ENCODE measurements at regions of chr2 and their contacts with region 1.

Region 1: DNA sequence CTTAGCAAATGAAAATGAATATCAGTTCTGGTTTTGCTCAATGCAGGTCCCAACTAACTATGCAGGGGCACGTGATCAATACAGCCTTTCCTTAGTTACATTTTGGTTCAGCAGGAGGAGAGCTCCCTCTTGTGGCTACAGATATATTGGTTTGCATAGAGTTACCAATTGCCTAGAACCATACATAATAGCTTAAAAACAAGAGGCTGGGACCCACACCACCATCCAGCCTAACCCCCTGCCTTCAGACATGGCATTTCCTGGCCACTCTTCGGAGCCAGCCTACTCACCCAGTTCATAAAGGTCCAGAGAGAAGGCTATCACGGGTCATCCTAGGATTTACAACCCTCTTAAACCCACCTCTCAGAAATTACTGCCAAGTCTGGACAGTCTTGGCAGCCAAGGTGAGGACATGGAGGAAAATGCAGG is 10.5 kb downstream of the CCDC93 start:
- DNase-seq: peak in 4 of 10 donors; percentile 27 to 80 (median 40)

Region 2: DNA sequence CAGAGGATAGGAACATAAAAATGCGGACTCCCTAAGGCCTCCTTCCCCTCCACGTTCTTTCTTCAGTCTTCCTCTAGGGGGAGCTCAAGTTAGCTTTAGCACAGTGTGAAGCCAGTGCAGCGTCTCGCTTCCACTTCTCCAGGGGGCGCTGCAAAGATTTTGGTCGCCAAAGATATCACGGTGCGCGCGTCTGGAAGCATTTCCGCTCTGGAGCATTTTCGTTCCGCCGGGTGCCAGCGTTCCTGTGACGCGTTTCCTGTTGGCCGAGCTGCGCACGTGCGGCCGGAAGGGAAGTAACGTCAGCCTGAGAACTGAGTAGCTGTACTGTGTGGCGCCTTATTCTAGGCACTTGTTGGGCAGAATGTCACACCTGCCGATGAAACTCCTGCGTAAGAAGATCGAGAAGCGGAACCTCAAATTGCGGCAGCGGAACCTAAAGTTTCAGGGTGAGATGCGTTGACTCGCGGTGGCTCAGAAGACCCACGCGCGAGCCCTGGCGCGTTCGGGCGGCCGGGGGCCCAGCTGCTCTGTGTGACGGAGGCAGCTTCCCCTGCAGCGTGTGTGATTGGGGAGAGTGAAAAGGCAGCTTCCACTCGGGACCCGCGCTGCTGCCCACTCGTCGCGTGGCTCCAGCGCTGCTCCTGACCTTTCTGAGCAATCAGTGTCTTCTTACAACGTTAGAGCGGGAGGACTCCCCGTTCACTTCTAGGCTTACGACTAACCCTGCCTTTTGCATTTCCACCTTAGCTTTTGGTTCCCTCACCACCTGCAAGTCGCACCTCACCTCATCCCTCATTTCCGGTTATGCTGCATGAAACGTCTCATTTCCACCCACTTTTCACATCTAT is 188.8 kb before region 1 on chr2 and contains the start of gene DDX18:
- intact Hi-C with region 1: loop called (anchors 1 kb)
- DNase-seq: peak; percentile 94 to 99 (median 97)

Region 3: DNA sequence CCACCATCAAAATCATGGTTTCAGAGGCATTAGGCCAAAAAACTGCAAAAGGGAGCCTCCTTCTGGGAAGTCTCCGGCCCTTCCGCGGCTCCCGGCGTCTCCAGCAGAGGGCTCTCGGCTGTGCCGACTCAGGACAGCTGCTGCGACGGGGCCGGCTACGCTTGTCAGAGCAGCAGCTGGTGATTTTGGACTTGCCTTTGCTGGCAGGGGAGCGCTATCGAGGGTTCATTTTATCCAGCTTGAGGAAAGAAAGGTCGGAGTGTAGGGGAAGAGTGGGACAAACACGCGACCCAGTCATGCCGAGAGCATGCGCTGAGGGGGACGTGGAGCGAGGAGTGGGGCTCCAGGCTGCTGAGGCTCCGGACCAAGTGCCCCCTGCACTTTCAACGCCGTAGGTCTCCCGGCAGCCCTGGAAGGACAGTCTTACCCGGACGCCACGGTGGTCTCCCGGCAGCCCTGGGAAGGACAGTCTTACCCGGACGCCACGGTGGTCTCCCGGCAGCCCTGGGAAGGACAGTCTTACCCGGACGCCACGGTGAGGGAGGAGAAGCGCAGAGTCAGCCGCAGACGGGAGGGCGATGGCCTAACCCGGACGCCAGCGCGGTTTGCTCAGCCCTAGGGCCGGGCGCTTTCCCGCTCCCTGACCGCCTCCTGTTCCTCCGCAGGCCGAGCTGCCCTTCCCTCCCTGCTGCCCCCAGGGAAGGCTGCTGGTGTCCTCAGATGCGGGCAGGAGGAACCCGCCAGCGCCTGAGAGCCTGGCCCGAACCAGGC is 167.2 kb before region 1 on chr2:
- intact Hi-C with region 1: loop called (anchors 1 kb)
- DNase-seq: peak; percentile 71 to 98 (median 86)

Measured in posterior cingulate gyrus (tissue), 11 donors.